ENCODE measurements at regions of chr1 and their contacts with region 1.

Region 1: GRCh38 chr1:51897699-51898031 is 19.1 kb upstream of the NRDC start:
- DNase-seq: no peak
- ATAC-seq: no peak

Region 2: GRCh38 chr1:51969038-51969705 is 71.5 kb after region 1 on chr1:
- intact Hi-C with region 1: no loop called
- DNase-seq: no peak
- ATAC-seq: no peak

Region 3: GRCh38 chr1:51997974-51998382 is 100.3 kb after region 1 on chr1:
- intact Hi-C with region 1: loop called (anchors 5 kb)
- DNase-seq: no peak
- ATAC-seq: no peak

Measured in Right ventricle myocardium superior (tissue), 1 donor.